ENCODE measurements at regions of chr1 and their contacts with region 1.

Region 1: GRCh38 chr1:246699095-246699735 is 25.0 kb upstream of the SCCPDH start:
- DNase-seq: peak; percentile 68 to 84 (median 77)
- H3K4me3 ChIP-seq: peak overlapping the region; percentile 26
- H3K27ac ChIP-seq: no peak overlapping the region
- H3K4me1 ChIP-seq: peaks cover 1% of the 10 kb centered on the region
- H3K27me3 ChIP-seq: no peaks in the 10 kb centered on the region
- CTCF ChIP-seq: peak; percentile 61 to 67 (median 64)
- EP300 ChIP-seq: no peak
- POLR2A ChIP-seq: no peak

Region 2: DNA sequence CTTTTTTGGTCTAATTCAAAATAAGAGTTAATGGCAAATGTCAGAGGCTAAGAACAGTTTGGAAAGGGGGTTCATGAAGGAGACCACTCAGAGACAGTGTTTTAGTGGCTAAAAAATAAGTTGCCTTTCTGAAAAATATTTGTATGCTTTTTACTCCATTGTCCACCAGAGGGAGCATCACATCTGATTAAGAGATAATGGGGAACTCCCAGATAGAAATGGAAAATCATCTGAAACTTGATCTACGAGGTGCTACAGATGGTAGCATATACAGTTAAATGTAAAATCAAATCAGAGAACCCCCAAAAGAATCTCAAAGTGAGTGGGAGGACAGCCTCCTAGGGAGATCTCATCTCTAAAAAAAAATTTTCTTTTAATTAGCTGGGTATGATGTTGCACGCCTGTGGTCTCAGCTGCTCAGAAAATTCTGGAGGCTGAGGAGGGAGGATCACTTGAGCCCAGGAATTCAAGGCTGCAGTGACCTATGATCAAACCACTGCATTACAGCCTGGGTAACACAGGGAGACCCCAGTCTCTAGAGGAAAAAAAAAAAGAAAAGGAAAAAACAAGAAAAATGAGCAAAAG is 201.8 kb before region 1 on chr1:
- intact Hi-C with region 1: loop called in 1 of 4 experiments (anchors 5 kb)
- DNase-seq: no peak
- H3K4me3 ChIP-seq: no peak overlapping the region
- H3K27ac ChIP-seq: no peak overlapping the region
- H3K4me1 ChIP-seq: no peaks in the 10 kb centered on the region
- H3K27me3 ChIP-seq: no peaks in the 10 kb centered on the region
- CTCF ChIP-seq: peak; percentile 31 to 56 (median 44)
- EP300 ChIP-seq: no peak
- POLR2A ChIP-seq: no peak

Region 3: GRCh38 chr1:246518441-246519205 is 180.6 kb before region 1 on chr1:
- intact Hi-C with region 1: loop called in 1 of 4 experiments (anchors 10 kb)
- DNase-seq: no peak
- H3K4me3 ChIP-seq: no peak overlapping the region
- H3K27ac ChIP-seq: no peak overlapping the region
- H3K4me1 ChIP-seq: no peaks in the 10 kb centered on the region
- H3K27me3 ChIP-seq: no peaks in the 10 kb centered on the region
- CTCF ChIP-seq: no peak
- EP300 ChIP-seq: no peak
- POLR2A ChIP-seq: no peak

Region 4: DNA sequence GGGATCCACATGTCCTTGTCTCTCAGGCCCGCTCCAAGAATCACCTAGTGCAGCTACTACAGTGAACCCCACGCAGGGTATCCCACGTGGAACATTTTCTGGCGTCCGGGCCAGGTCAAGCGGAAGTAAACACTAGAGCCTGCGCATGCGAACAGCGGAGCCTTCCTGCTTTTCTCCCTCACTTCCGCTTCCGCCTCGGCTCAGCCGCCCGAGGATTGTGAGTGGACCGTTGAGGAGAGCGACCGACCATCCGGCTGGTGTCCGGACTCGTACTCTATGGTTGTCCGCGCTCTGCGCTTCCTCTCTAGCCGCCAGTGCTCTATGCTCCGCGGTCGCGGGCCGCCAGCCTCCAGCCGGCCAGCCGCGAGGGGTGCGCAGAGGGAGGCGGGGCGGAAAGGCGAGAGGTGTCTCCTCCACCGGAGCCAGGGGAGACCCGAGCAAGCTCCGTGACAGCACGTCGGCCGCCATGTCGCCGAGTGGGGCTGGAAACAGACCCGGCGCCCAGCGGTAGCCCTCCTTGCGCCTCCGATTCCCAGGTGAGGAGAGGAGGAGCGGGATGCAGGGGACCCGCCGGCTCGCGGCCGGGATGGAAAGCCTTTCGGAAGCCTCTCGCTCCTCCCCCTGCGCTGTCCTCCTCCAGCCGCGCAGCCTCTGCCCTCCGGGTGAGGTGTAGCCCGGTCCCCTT is 132.9 kb before region 1 on chr1 and contains the starts of genes CNST and TFB2M:
- intact Hi-C with region 1: loop called in 3 of 4 experiments (anchors 5 to 10 kb)
- DNase-seq: peak; percentile 96 to 98 (median 97)
- H3K4me3 ChIP-seq: peak within 1 kb of the TSS; percentile 63
- H3K27ac ChIP-seq: peak within 1 kb of the TSS; percentile 92 to 93
- H3K4me1 ChIP-seq: peaks cover 7% of the 10 kb centered on the region
- H3K27me3 ChIP-seq: no peaks in the 10 kb centered on the region
- CTCF ChIP-seq: no peak
- EP300 ChIP-seq: no peak
- POLR2A ChIP-seq: peak; percentile 86
- total RNA-seq, gene CNST: 16.0 to 31.2 (median 23.5) TPM
- total RNA-seq, gene TFB2M: 7.1 to 9.8 (median 9.0) TPM